ENCODE measurements at regions of chr13 and their contacts with region 1.

Region 1: DNA sequence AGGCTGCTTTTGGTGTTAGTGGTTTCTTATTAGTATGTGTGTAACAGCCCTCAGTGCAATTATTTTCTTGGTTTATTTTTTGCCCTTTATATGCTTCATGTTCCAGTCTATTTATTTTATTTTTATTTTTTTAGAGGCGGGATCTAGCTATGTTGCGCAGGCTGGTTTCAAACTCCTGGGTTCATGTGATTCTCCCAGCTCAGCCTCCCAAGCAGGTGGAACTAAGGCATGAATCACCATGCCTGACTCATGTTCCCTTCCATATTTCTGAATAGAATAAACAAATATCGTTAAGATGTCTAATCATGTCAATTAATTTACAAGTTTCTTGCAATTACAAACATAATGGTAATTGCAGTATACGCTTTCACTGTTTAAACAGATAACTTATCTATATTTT is 11.7 kb downstream of the SKA3 start:
- DNase-seq: no peak
- ATAC-seq: no peak
- H3K4me3 ChIP-seq: no peak overlapping the region
- H3K27ac ChIP-seq: no peak overlapping the region
- H3K4me1 ChIP-seq: no peaks in the 10 kb centered on the region
- H3K27me3 ChIP-seq: no peaks in the 10 kb centered on the region
- CTCF ChIP-seq: no peak
- EP300 ChIP-seq: no peak
- POLR2A ChIP-seq: no peak
- RAD21 ChIP-seq: no peak

Region 2: GRCh38 chr13:20997430-20998161 is 167.0 kb before region 1 on chr13:
- CTCF ChIA-PET with region 1: no interaction called
- POLR2A ChIA-PET with region 1: no interaction called
- RAD21 ChIA-PET with region 1: no interaction called
- SMC1A ChIA-PET with region 1: no interaction called
- in situ Hi-C with region 1: no loop called
- intact Hi-C with region 1: no loop called
- DNase-seq: no peak
- ATAC-seq: no peak
- H3K4me3 ChIP-seq: no peak overlapping the region
- H3K27ac ChIP-seq: no peak overlapping the region
- H3K4me1 ChIP-seq: no peaks in the 10 kb centered on the region
- H3K27me3 ChIP-seq: no peaks in the 10 kb centered on the region
- CTCF ChIP-seq: no peak
- EP300 ChIP-seq: no peak
- POLR2A ChIP-seq: no peak
- RAD21 ChIP-seq: no peak

Region 3: GRCh38 chr13:21149568-21149967 is 15.1 kb before region 1 on chr13:
- CTCF ChIA-PET with region 1: interaction called, 3 read pairs
- POLR2A ChIA-PET with region 1: interaction called, 7 read pairs
- RAD21 ChIA-PET with region 1: no interaction called
- SMC1A ChIA-PET with region 1: interaction called, 3 read pairs
- in situ Hi-C with region 1: no loop called
- intact Hi-C with region 1: loop called (anchors 1 kb)
- DNase-seq: no peak
- ATAC-seq: peak; percentile 79
- H3K4me3 ChIP-seq: no peak overlapping the region
- H3K27ac ChIP-seq: no peak overlapping the region
- H3K4me1 ChIP-seq: no peaks in the 10 kb centered on the region
- H3K27me3 ChIP-seq: no peaks in the 10 kb centered on the region
- CTCF ChIP-seq: no peak
- EP300 ChIP-seq: no peak
- POLR2A ChIP-seq: no peak
- RAD21 ChIP-seq: no peak

Region 4: DNA sequence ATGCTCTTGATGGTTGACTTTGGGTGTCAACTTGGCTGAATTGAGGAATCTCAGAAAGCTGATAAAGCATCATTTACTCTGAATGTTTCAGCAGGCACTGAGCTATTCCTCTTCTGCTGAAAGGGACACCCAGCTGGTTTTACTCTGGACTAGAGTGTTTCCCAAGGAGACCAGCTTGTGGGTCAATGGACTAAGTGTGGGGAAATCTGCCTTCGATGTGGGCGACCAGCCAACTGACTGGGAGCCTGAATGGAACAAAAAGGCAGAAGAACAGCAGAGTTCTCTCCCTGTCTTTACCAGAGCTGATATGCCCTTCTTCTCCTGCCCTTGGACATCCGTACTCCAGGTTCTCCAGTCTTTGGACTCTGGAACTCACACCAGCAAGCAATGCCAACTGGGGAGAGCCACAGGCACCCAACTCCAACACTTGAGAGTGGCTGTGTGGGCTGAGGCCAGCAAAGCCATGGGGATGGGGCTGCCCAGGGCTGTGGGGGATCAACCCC is 44.1 kb after region 1 on chr13:
- CTCF ChIA-PET with region 1: no interaction called
- POLR2A ChIA-PET with region 1: no interaction called
- RAD21 ChIA-PET with region 1: no interaction called
- SMC1A ChIA-PET with region 1: no interaction called
- in situ Hi-C with region 1: no loop called
- intact Hi-C with region 1: no loop called
- DNase-seq: no peak
- ATAC-seq: no peak
- H3K4me3 ChIP-seq: no peak overlapping the region
- H3K27ac ChIP-seq: no peak overlapping the region
- H3K4me1 ChIP-seq: no peaks in the 10 kb centered on the region
- H3K27me3 ChIP-seq: no peaks in the 10 kb centered on the region; a peak in 1 of 4 replicates
- CTCF ChIP-seq: no peak
- EP300 ChIP-seq: no peak
- POLR2A ChIP-seq: no peak
- RAD21 ChIP-seq: no peak